Naive thymus-derived CD4-positive, alpha-beta T cell (primary cell): ENCODE measurements at regions of chr1 and their contacts with region 1.

Region 1: GRCh38 chr1:77219166-77219887 is at the start of gene PIGK:
- DNase-seq: peak; percentile 62 to 87 (median 84)
- ATAC-seq: peak; percentile 99
- H3K4me3 ChIP-seq: peak within 1 kb of the TSS; percentile 99
- H3K4me3 Mint-ChIP-seq: peak within 1 kb of the TSS; percentile 92 to 97 (median 96)
- H3K27ac ChIP-seq: peak within 1 kb of the TSS; percentile 89
- H3K27ac Mint-ChIP-seq: peak within 1 kb of the TSS; percentile 91 to 99 (median 96)
- H3K4me1 ChIP-seq: peaks cover 13 to 15% of the 10 kb centered on the region in 2 donors
- H3K4me1 Mint-ChIP-seq: peaks cover 34 to 75% (median 62%) of the 10 kb centered on the region in 7 donors
- H3K27me3 ChIP-seq: no peaks in the 10 kb centered on the region
- H3K27me3 Mint-ChIP-seq: no peaks in the 10 kb centered on the region
- total RNA-seq, gene PIGK: 17.7 to 31.3 (median 20.6) TPM

Region 2: GRCh38 chr1:75785983-75786853 is 1433.1 kb before region 1 on chr1 and contains the start of gene RABGGTB:
- CTCF ChIA-PET with region 1: no interaction called
- POLR2A ChIA-PET with region 1: no interaction called
- intact Hi-C with region 1: loop called (anchors 5 to 10 kb)
- DNase-seq: peak; percentile 87 to 94 (median 91)
- ATAC-seq: peak; percentile 98
- H3K4me3 ChIP-seq: peak within 1 kb of the TSS; percentile 97
- H3K4me3 Mint-ChIP-seq: peak within 1 kb of the TSS; percentile 88 to 99 (median 97)
- H3K27ac ChIP-seq: peak within 1 kb of the TSS; percentile 83
- H3K27ac Mint-ChIP-seq: peak within 1 kb of the TSS; percentile 85 to 99 (median 97)
- H3K4me1 ChIP-seq: peaks cover 33 to 44% of the 10 kb centered on the region in 2 donors
- H3K4me1 Mint-ChIP-seq: peaks cover 44 to 62% (median 48%) of the 10 kb centered on the region in 7 donors
- H3K27me3 ChIP-seq: no peaks in the 10 kb centered on the region
- H3K27me3 Mint-ChIP-seq: peaks cover 0 to 7% (median 0%) of the 10 kb centered on the region in 5 donors
- total RNA-seq, gene RABGGTB: 89.7 to 140 (median 101) TPM

Region 3: GRCh38 chr1:77281491-77282186 is 62.3 kb after region 1 on chr1 and contains the start of gene AK5:
- CTCF ChIA-PET with region 1: no interaction called
- POLR2A ChIA-PET with region 1: interaction called, 20 read pairs
- intact Hi-C with region 1: loop called (anchors 1 kb)
- DNase-seq: peak; percentile 32 to 60 (median 53)
- ATAC-seq: peak; percentile 76
- H3K4me3 ChIP-seq: peak within 1 kb of the TSS; percentile 74
- H3K4me3 Mint-ChIP-seq: peak within 1 kb of the TSS; percentile 75 to 95 (median 92)
- H3K27ac ChIP-seq: peak within 1 kb of the TSS; percentile 67
- H3K27ac Mint-ChIP-seq: peak within 1 kb of the TSS in 8 of 9 donors; percentile 76 to 95 (median 84)
- H3K4me1 ChIP-seq: peaks cover 0 to 31% of the 10 kb centered on the region in 2 donors
- H3K4me1 Mint-ChIP-seq: peaks cover 29 to 72% (median 59%) of the 10 kb centered on the region in 7 donors
- H3K27me3 ChIP-seq: no peaks in the 10 kb centered on the region
- H3K27me3 Mint-ChIP-seq: peaks cover 0 to 46% (median 0%) of the 10 kb centered on the region in 5 donors
- total RNA-seq, gene AK5: 1.7 to 59.4 (median 41.0) TPM

Region 4: GRCh38 chr1:77430966-77431690 is 211.8 kb after region 1 on chr1:
- CTCF ChIA-PET with region 1: no interaction called
- POLR2A ChIA-PET with region 1: no interaction called
- intact Hi-C with region 1: loop called (anchors 1 to 5 kb)
- DNase-seq: peak in 7 of 9 donors; percentile 40 to 81 (median 68)
- ATAC-seq: peak; percentile 97
- H3K4me3 ChIP-seq: peak overlapping the region; percentile 3
- H3K4me3 Mint-ChIP-seq: no peak overlapping the region
- H3K27ac ChIP-seq: peak overlapping the region; percentile 65
- H3K27ac Mint-ChIP-seq: no peak overlapping the region
- H3K4me1 ChIP-seq: peaks cover 32 to 55% of the 10 kb centered on the region in 2 donors
- H3K4me1 Mint-ChIP-seq: peaks cover 5 to 33% (median 20%) of the 10 kb centered on the region in 7 donors
- H3K27me3 ChIP-seq: no peaks in the 10 kb centered on the region
- H3K27me3 Mint-ChIP-seq: no peaks in the 10 kb centered on the region

Region 5: DNA sequence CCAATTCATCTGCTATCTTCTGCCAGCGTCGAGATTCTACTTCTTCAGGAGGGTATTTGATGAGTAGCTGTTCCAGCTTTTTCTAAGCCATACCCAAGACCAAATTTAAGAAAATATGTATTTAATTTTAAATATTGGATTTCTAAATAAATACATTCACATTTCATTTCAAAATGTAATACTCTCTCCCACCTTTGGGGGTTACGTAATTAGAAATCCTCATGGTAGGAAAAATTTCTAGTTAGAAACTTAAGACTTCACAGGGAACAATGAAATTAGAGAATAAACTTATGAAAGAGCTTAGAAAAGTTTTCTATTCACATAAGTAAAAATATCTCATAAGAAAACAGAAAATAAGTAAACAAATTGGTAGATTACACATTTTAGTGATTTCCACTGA is 360.2 kb after region 1 on chr1:
- CTCF ChIA-PET with region 1: no interaction called
- POLR2A ChIA-PET with region 1: no interaction called
- intact Hi-C with region 1: no loop called
- DNase-seq: no peak
- ATAC-seq: no peak
- H3K4me3 ChIP-seq: no peak overlapping the region
- H3K4me3 Mint-ChIP-seq: no peak overlapping the region
- H3K27ac ChIP-seq: no peak overlapping the region
- H3K27ac Mint-ChIP-seq: no peak overlapping the region
- H3K4me1 ChIP-seq: no peaks in the 10 kb centered on the region
- H3K4me1 Mint-ChIP-seq: peaks cover 0 to 3% (median 0%) of the 10 kb centered on the region in 7 donors
- H3K27me3 ChIP-seq: no peaks in the 10 kb centered on the region
- H3K27me3 Mint-ChIP-seq: no peaks in the 10 kb centered on the region

Region 6: DNA sequence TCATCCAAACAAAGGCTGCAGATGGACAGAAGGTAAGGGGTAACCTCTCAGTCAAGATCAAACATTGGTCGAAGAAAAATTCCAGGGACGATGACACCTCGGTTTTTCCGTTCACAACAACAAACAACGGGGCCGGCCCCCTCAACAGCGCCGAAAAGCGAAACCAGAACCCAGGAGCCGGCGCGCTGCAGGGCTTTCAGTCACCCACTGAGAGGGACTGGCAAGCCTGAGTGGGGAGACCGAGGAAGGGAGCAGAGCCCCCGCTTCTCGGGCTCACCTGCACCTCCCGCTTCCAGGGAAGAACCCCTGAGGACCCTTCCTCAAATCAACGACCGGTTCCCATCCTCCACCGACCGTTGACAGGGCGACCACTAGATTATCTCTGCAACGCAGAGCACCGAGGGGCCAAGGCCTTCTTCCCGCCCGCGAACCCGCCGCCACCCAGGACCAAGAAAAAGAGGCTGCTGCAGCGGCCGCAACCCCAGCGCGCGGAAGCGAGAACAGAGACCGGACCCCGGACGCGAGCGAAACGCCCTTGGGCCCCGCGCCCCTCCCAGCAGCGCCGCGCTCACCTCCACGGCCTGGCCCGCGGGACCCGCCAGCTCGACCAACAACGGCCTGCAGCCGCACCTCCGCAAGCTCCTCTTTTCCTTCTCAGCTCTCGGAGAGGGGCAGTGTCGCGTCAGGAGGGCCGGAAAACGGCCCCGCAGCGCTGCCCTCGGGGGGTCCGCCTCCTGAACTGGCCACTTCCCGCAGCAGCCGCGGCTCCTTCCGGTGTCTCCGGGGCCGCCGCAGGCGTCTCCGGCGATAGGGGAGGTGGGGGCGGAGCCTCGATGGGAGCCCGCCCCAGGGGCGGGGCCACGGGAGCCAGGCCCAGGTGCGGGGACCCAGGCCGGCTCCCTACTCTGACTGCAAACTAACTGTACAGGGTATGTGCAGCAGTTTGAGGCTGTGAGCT is 540.0 kb after region 1 on chr1 and contains the start of gene USP33:
- CTCF ChIA-PET with region 1: no interaction called
- POLR2A ChIA-PET with region 1: no interaction called
- intact Hi-C with region 1: loop called in 1 of 2 experiments (anchors 5 kb)
- DNase-seq: peak; percentile 87 to 98 (median 92)
- ATAC-seq: peak; percentile 98
- H3K4me3 ChIP-seq: peak within 1 kb of the TSS; percentile 61
- H3K4me3 Mint-ChIP-seq: peak within 1 kb of the TSS; percentile 93 to 98 (median 96)
- H3K27ac ChIP-seq: peak within 1 kb of the TSS; percentile 86
- H3K27ac Mint-ChIP-seq: peak within 1 kb of the TSS; percentile 84 to 97 (median 94)
- H3K4me1 ChIP-seq: peaks cover 24 to 25% of the 10 kb centered on the region in 2 donors
- H3K4me1 Mint-ChIP-seq: peaks cover 28 to 64% (median 43%) of the 10 kb centered on the region in 7 donors
- H3K27me3 ChIP-seq: no peaks in the 10 kb centered on the region
- H3K27me3 Mint-ChIP-seq: peaks cover 0 to 10% (median 0%) of the 10 kb centered on the region in 5 donors
- total RNA-seq, gene USP33: 54.0 to 101 (median 86.4) TPM

Region 7: DNA sequence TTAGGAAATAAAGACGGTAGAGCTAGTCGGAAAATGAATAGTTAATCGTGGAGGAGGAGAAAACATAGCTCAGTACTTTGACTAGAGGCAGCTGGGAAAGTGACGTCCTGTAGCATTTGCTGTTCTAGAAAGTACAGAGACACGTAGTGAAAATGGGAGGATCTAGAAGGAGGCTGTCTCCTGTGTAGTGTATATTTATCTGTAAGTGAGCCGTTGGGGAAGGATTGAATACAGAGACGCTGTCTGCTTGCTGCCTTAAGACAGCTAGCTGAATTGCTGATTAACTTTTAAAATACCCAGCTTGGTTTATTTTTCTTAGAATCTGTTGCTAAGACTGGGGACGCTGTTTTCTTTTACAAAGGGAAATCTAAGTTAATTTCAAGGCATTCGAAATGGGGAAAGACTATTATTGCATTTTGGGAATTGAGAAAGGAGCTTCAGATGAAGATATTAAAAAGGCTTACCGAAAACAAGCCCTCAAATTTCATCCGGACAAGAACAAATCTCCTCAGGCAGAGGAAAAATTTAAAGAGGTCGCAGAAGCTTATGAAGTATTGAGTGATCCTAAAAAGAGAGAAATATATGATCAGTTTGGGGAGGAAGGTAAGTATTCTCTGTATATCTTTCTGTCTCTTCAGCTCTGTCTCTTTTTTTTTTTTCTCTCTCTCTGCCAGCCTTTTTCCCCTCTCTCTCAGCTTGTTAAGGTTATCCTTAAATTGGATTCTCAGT is 785.6 kb after region 1 on chr1 and contains the start of gene DNAJB4:
- CTCF ChIA-PET with region 1: no interaction called
- POLR2A ChIA-PET with region 1: no interaction called
- intact Hi-C with region 1: loop called (anchors 10 kb)
- DNase-seq: peak in 8 of 9 donors; percentile 30 to 92 (median 87)
- ATAC-seq: peak; percentile 99
- H3K4me3 ChIP-seq: peak within 1 kb of the TSS; percentile 57
- H3K4me3 Mint-ChIP-seq: peak within 1 kb of the TSS; percentile 87 to 99 (median 92)
- H3K27ac ChIP-seq: peak within 1 kb of the TSS; percentile 95
- H3K27ac Mint-ChIP-seq: peak within 1 kb of the TSS; percentile 92 to 100 (median 99)
- H3K4me1 ChIP-seq: peaks cover 8 to 17% of the 10 kb centered on the region in 2 donors
- H3K4me1 Mint-ChIP-seq: peaks cover 9 to 57% (median 53%) of the 10 kb centered on the region in 7 donors
- H3K27me3 ChIP-seq: no peaks in the 10 kb centered on the region
- H3K27me3 Mint-ChIP-seq: peaks cover 0 to 3% (median 0%) of the 10 kb centered on the region in 5 donors
- total RNA-seq, gene DNAJB4: 11.4 to 20.1 (median 18.2) TPM